PC-3 (cell line): ENCODE measurements at regions of chr14 and their contacts with region 1.

Region 1: GRCh38 chr14:60184146-60184904 is 19.1 kb upstream of the DHRS7 start:
- DNase-seq: peak; percentile 98
- ATAC-seq: peak; percentile 13; the same call in 1 of the 2 replicates
- H3K4me3 ChIP-seq: peak overlapping the region; percentile 50
- H3K27ac ChIP-seq: no peak overlapping the region
- H3K4me1 ChIP-seq: peaks cover 29% of the 10 kb centered on the region
- H3K27me3 ChIP-seq: no peaks in the 10 kb centered on the region
- CTCF ChIP-seq: peak; percentile 100

Region 2: DNA sequence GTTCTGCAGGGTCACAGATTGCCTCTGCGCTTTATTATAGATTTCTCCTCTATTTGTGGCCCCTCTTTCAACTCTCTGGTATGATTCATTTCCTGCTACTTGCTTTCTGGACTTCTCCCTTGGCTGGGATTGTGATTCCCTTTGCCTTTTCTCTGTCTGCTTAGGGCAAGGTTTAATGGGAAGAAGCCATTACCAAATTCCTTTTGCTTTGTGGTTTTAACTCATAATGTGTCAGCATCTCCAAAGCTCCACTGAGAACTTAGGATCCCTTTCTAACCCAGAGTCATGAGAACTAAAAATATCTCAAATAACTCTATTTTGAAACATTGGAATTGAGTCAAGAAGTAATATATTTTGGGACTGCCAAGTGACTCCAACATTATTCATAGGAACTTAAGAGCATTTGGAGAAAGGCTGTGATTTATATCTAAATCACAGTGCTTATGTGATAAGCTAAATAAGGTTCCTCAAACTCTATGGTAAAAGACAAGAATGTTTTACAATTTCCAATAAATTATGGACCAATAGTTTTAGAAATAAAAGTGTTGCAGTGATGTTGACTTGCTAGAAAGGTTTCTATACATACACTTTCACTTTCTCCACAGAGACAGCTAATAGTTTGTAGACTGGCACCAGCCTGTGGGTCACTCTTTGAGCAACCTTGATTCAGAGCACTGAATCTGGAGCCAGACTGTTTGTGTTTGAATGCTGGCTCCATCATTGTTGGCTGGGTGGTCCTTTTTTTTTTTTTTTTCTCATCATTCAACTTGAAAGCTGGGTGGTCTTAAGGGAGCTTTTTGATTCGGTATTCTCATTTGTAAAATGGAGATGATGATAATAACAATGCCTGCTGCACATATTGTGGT is 1452.6 kb before region 1 on chr14:
- CTCF ChIA-PET with region 1: no interaction called
- POLR2A ChIA-PET with region 1: no interaction called
- intact Hi-C with region 1: loop called (anchors 5 kb)
- DNase-seq: peak; percentile 100
- ATAC-seq: peak; percentile 94
- H3K4me3 ChIP-seq: peak overlapping the region; percentile 1; the same call in 1 of the 2 replicates
- H3K27ac ChIP-seq: peak overlapping the region; percentile 85
- H3K4me1 ChIP-seq: peaks cover 31% of the 10 kb centered on the region
- H3K27me3 ChIP-seq: no peaks in the 10 kb centered on the region
- CTCF ChIP-seq: no peak

Region 3: DNA sequence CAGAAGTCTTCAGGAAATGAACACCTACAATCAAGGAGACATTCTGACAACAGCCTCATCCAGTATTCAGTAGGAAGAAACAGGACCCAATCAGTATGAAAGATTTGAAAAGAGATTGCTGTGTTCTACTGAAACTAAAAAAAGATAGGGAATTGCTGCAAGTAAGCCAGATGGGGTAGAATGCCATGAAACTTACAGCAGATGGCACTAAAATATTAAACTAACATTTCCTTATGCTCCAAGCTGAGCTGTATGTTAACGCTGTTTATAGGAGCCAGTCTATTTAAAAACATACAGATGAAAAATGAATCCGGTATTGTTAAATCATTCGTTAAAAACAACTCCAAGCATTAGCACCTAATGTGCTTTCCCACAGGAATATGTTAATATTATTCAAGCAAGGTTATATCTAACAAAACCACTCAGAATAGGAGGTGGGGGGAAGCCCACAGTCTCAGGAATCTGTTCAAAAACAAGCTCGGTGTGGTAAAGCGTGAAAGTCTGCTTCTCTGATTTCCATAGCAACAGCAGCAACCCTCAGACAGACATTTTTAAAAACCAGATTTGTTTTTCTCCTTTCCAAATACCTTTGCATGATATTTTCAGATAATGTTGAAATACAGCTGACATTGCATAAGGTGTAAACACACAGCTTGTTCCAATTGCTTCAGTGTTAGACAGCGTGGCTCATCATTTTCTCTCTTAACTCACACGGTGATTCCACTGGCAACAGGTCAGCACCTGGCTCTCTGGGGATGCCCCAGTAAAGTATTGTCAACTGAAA is 476.4 kb before region 1 on chr14:
- CTCF ChIA-PET with region 1: interaction called, 4 read pairs
- POLR2A ChIA-PET with region 1: no interaction called
- intact Hi-C with region 1: loop called (anchors 5 kb)
- DNase-seq: peak; percentile 33
- ATAC-seq: peak; percentile 61
- H3K4me3 ChIP-seq: no peak overlapping the region
- H3K27ac ChIP-seq: no peak overlapping the region
- H3K4me1 ChIP-seq: no peaks in the 10 kb centered on the region
- H3K27me3 ChIP-seq: peaks cover 87% of the 10 kb centered on the region
- CTCF ChIP-seq: peak; percentile 18; the same call in 1 of the 2 replicates

Region 4: GRCh38 chr14:60064491-60065072 is 119.7 kb before region 1 on chr14:
- CTCF ChIA-PET with region 1: interaction called, 9 read pairs
- POLR2A ChIA-PET with region 1: no interaction called
- intact Hi-C with region 1: loop called (anchors 1 kb)
- DNase-seq: peak; percentile 87
- ATAC-seq: peak; percentile 49
- H3K4me3 ChIP-seq: no peak overlapping the region
- H3K27ac ChIP-seq: no peak overlapping the region
- H3K4me1 ChIP-seq: peaks cover 19% of the 10 kb centered on the region
- H3K27me3 ChIP-seq: no peaks in the 10 kb centered on the region
- CTCF ChIP-seq: peak; percentile 98

Region 5: GRCh38 chr14:60164712-60165546 is 19.4 kb before region 1 on chr14 and contains the start of gene DHRS7:
- CTCF ChIA-PET with region 1: interaction called, 18 read pairs
- POLR2A ChIA-PET with region 1: no interaction called
- intact Hi-C with region 1: loop called (anchors 1 kb)
- DNase-seq: peak; percentile 99
- ATAC-seq: peak; percentile 95
- H3K4me3 ChIP-seq: peak within 1 kb of the TSS; percentile 75
- H3K27ac ChIP-seq: peak within 1 kb of the TSS; percentile 61
- H3K4me1 ChIP-seq: peaks cover 34% of the 10 kb centered on the region
- H3K27me3 ChIP-seq: no peaks in the 10 kb centered on the region
- CTCF ChIP-seq: peak; percentile 85
- total RNA-seq, gene DHRS7: 236 and 266 TPM in 2 replicates

Region 6: GRCh38 chr14:60349663-60350365 is 165.5 kb after region 1 on chr14:
- CTCF ChIA-PET with region 1: no interaction called
- POLR2A ChIA-PET with region 1: interaction called, 6 read pairs
- intact Hi-C with region 1: loop called (anchors 5 kb)
- DNase-seq: peak; percentile 90
- ATAC-seq: peak; percentile 82
- H3K4me3 ChIP-seq: no peak overlapping the region
- H3K27ac ChIP-seq: no peak overlapping the region
- H3K4me1 ChIP-seq: no peaks in the 10 kb centered on the region
- H3K27me3 ChIP-seq: peaks cover 15% of the 10 kb centered on the region
- CTCF ChIP-seq: peak; percentile 99

Region 7: DNA sequence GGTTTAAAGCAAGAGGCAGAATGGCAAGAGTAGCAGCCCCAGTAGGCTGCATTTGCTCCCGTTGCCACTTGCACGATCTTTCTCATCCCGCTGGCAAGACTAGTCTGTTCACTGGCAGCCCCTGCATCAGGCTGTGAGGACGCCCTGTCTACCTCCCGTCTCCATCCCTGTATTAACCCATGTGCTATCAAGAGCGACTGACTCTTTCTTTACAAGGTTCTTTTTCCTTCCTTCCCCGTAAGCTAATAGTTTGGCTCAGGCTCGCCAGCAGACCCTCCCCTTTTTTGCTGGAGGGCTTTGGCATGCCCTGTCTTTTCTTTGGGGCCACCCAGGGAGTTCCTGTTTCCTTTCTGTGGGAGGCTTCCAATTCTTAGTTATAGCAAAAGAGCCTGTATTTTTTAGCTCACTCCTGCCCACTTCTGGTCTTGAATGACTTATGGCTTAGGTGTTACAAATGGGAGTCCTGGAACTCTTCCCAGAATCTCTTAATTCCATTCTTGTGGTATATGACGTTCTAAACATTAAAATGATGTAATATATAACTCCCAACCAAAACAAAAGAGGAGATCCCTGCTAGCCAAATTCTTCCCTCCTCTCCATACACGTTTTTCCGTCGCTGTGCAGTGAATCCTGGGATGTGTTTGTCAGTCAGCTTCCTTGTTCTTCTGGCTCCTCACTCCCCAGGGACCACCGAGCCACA is 1286.1 kb after region 1 on chr14:
- CTCF ChIA-PET with region 1: no interaction called
- POLR2A ChIA-PET with region 1: no interaction called
- intact Hi-C with region 1: no loop called
- DNase-seq: peak; percentile 92
- ATAC-seq: peak; percentile 39
- H3K4me3 ChIP-seq: no peak overlapping the region
- H3K27ac ChIP-seq: peak overlapping the region; percentile 93
- H3K4me1 ChIP-seq: peaks cover 58% of the 10 kb centered on the region
- H3K27me3 ChIP-seq: no peaks in the 10 kb centered on the region
- CTCF ChIP-seq: peak; percentile 72